ENCODE measurements at regions of chr11 and their contacts with region 1.

Region 1: GRCh38 chr11:1832211-1832919 is 2.4 kb upstream of the SYT8 start:
- DNase-seq: peak; percentile 41
- ATAC-seq: peak; percentile 32
- H3K4me3 ChIP-seq: peak overlapping the region; percentile 56; the same call in 1 of the 2 replicates
- H3K27ac ChIP-seq: no peak overlapping the region
- H3K4me1 ChIP-seq: peaks cover 59% of the 10 kb centered on the region
- H3K27me3 ChIP-seq: no peaks in the 10 kb centered on the region
- CTCF ChIP-seq: peak; percentile 92

Region 2: DNA sequence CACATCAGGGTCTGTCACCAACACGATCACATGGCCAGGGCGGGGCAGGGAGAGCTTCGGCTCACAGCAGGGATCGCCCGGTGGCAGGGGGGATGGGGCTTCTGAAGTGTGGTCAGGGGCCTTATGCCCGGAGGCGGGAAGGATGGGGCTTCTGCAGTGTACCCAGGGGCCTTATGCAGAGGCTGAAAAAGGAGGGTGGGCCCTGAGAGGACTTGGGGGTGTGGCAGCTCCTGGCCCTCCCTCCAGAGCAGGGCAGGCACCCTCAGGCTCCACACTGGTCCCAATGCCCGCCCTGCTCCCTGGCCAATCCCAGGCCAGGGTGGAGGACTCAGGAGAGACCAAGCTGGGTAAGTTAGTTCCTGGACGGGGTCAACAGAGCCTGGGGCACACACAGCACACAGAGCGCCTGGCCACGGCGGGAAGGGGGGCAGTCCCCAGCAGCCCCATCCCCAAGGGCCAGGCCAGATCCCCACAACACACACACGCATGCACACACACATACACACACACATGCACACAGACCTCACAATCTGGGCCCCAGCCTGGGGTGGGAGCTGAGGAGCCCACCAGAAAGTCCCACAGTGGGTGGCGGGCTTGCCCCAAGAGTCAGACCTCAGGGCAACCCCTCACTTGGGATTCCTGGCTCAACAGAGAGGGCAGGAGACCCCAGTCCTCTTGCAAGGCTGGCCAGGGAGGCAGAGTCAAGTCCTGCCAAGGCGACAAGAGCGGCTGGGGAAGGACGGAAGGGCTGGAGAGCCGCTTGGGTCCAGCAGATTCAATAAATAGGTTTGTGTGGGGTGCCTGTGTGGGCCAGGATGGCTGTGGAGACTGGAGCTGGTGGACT is 1041.4 kb before region 1 on chr11:
- CTCF ChIA-PET with region 1: interaction called, 14 read pairs
- POLR2A ChIA-PET with region 1: no interaction called
- intact Hi-C with region 1: no loop called
- DNase-seq: no peak
- ATAC-seq: peak; percentile 31
- H3K4me3 ChIP-seq: no peak overlapping the region
- H3K27ac ChIP-seq: no peak overlapping the region
- H3K4me1 ChIP-seq: 0 out of 2 replicates have a peak, but pooled peaks cover 10% of the 10 kb centered on the region
- H3K27me3 ChIP-seq: no peaks in the 10 kb centered on the region
- CTCF ChIP-seq: no peak

Region 3: DNA sequence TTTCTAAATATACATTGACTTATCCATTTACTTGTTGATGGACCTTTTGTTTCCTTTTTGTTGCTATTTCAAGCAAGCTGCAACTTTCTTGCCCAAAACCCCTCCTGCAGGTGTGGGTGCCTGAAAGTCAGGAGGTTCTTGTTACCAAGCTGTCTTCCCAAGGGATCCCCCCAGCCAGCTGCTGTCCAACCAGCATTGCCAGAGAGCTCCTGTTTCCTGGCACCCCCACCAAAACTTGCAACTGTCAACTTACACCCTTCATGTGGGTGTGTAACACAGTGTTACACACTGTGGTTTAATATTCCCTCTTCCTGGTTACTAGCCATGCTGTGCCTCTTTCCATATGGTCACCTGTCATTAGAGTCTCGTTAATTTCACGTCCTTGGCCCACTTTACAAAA is 245.7 kb before region 1 on chr11:
- CTCF ChIA-PET with region 1: interaction called, 9 read pairs
- POLR2A ChIA-PET with region 1: interaction called, 16 read pairs
- intact Hi-C with region 1: no loop called
- DNase-seq: no peak
- ATAC-seq: no peak
- H3K4me3 ChIP-seq: no peak overlapping the region
- H3K27ac ChIP-seq: no peak overlapping the region
- H3K4me1 ChIP-seq: peaks cover 5% of the 10 kb centered on the region
- H3K27me3 ChIP-seq: no peaks in the 10 kb centered on the region
- CTCF ChIP-seq: no peak

Region 4: DNA sequence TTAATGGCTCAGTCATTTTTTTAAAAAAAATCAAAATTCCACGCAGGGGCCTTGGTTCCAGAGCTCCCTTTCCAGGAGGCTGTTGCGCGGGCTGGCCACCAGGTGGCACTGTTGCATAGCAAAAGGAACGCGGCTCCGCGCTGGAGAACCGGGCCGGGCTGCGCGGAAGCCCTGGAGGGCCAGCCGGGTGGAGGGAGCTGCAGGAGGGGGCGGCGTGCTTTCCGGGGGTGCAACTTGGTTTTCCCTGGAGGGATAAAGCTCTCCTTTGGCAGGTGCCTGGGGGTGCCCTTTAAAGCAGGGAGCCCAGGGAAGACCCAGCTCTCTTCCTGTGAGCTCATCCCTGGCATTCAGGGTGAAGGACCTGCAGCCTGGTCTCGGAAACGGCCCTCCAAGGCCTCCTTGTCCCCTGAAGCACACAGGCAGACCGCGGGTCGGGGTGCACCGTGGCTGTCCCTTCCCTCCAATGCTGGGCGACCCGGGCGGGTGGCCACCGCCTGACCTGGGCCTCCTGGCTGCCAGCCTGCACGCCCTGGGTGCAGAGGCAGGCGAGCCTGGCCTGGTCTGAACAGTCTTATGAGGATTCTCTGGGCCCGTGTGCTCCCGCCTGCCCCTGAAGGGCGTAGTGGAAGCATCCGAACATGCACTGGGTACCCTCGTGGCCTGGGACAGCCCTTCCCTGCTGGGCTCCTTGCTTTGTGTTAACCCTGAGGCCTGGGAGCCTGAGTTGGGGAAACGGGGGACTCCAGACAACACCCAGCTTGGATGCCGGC is 179.4 kb before region 1 on chr11:
- CTCF ChIA-PET with region 1: interaction called, 16 read pairs
- POLR2A ChIA-PET with region 1: no interaction called
- intact Hi-C with region 1: no loop called
- DNase-seq: peak; percentile 70
- ATAC-seq: peak; percentile 89
- H3K4me3 ChIP-seq: no peak overlapping the region
- H3K27ac ChIP-seq: no peak overlapping the region
- H3K4me1 ChIP-seq: no peaks in the 10 kb centered on the region
- H3K27me3 ChIP-seq: 0 out of 2 replicates have a peak, but pooled peaks cover 5% of the 10 kb centered on the region
- CTCF ChIP-seq: peak; percentile 91

Region 5: DNA sequence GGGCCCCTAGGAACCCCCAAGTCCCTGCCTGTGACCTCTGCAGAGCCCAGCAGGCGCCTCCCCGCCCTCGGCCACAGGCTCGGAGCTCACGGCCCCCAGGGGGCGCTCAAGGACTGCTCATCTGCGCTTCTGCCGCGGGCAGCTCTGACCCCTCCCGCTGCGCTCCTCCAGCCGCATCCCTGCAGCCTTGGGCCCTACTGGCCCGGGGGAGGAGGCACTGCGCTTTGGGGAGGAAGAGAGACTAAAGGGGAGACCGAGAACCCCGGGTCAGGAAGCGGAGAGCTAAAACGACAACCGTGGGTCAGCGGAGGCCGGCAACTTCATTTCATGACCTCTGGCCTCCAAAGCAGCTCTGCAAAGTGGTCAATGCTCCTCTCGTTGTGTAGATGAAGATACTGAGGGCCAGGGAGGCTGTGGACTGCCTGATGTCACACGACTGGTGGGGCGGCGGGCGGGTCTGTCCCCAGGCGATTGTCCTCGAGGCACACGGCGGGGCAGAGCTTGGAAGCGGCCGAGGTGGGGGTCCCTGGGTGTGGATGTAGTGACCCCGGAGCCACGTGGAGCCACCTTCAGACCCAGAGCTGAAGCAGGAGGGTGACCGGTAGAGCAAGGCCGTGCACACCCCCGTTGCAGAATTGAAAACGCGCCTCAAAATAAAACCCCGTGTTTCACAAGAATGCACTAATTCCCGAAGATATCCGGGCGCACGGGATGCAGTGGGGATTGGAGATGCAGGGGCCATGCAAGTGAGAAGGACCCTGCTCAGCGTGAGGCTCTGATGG is 138.1 kb before region 1 on chr11:
- CTCF ChIA-PET with region 1: interaction called, 96 read pairs
- POLR2A ChIA-PET with region 1: no interaction called
- intact Hi-C with region 1: loop called (anchors 1 kb)
- DNase-seq: peak; percentile 86
- ATAC-seq: peak; percentile 90
- H3K4me3 ChIP-seq: peak overlapping the region; percentile 63; the same call in 1 of the 2 replicates
- H3K27ac ChIP-seq: no peak overlapping the region
- H3K4me1 ChIP-seq: peaks cover 7% of the 10 kb centered on the region; the same call in 1 of the 2 replicates
- H3K27me3 ChIP-seq: no peaks in the 10 kb centered on the region
- CTCF ChIP-seq: peak; percentile 83

Region 6: DNA sequence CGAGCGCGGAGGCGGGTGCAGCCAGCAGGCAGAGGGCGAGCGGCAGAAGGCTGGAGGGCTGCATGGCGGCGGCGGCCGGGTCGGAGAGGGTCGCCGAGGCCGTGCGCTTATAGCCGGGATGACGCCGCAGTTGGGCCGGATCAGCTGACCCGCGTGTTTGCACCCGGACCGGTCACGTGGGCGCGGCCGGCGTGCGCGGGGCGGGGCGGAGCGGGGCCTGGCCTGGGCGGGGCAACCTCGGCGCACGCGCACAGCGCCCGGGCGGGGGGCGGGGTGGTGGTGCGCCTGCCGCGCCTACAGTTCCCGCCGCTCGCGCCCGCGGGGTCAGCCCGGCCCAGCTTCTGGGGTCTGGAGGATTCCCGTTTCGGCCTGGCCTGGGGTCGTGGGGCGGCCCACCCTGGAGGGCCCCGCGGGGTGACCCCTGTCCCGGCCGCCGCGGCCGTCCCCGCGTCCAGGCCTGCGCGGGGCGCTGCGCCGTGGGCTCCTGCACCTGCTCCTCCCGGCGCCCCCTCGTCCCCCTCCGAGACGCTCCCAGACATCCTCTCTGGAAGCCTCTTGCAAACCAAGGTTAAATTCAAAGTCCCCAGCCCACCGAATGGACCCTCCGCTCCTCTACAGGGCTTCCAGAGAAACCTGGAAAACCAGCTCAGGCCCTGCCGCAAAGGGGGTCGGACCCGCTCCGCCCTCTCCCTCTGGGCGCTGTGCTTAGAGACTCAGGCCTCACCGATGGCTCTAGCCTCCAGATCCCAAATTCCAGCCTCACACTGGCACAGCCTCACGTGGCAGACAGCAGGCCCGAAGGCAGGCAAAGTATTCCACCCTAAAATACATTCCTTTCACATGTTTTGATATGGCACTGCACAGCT is 68.3 kb before region 1 on chr11 and contains the start of gene CTSD:
- CTCF ChIA-PET with region 1: interaction called, 16 read pairs
- POLR2A ChIA-PET with region 1: no interaction called
- intact Hi-C with region 1: loop called (anchors 5 kb)
- DNase-seq: peak; percentile 72
- ATAC-seq: peak; percentile 75
- H3K4me3 ChIP-seq: peak within 1 kb of the TSS; percentile 87
- H3K27ac ChIP-seq: peak within 1 kb of the TSS; percentile 40
- H3K4me1 ChIP-seq: peaks cover 30% of the 10 kb centered on the region
- H3K27me3 ChIP-seq: no peaks in the 10 kb centered on the region
- CTCF ChIP-seq: peak; percentile 23; the same call in 1 of the 2 replicates
- total RNA-seq, gene CTSD: 308 and 358 TPM in 2 replicates

Region 7: GRCh38 chr11:1785749-1786413 is 46.5 kb before region 1 on chr11:
- CTCF ChIA-PET with region 1: interaction called, 15 read pairs
- POLR2A ChIA-PET with region 1: no interaction called
- intact Hi-C with region 1: no loop called
- DNase-seq: no peak
- ATAC-seq: no peak
- H3K4me3 ChIP-seq: no peak overlapping the region
- H3K27ac ChIP-seq: no peak overlapping the region
- H3K4me1 ChIP-seq: peaks cover 13% of the 10 kb centered on the region
- H3K27me3 ChIP-seq: peaks cover 7% of the 10 kb centered on the region; the same call in 1 of the 2 replicates
- CTCF ChIP-seq: no peak